Posterior cingulate gyrus (tissue), 11 donors: ENCODE measurements at regions of chr5 and their contacts with region 1.

Region 1: GRCh38 chr5:156934450-156935211 is 28.4 kb downstream of the TIMD4 start:
- DNase-seq: peak in 6 of 10 donors; percentile 20 to 86 (median 36)

Region 2: GRCh38 chr5:155616779-155617392 is 1317.7 kb before region 1 on chr5:
- intact Hi-C with region 1: loop called (anchors 10 kb)
- DNase-seq: peak in 8 of 10 donors; percentile 48 to 88 (median 60)

Region 3: GRCh38 chr5:156375895-156376495 is 558.6 kb before region 1 on chr5:
- intact Hi-C with region 1: no loop called
- DNase-seq: no peak

Region 4: GRCh38 chr5:157004893-157005551 is 70.4 kb after region 1 on chr5:
- intact Hi-C with region 1: no loop called
- DNase-seq: no peak